ENCODE measurements at regions of chr4 and their contacts with region 1.

Region 1: DNA sequence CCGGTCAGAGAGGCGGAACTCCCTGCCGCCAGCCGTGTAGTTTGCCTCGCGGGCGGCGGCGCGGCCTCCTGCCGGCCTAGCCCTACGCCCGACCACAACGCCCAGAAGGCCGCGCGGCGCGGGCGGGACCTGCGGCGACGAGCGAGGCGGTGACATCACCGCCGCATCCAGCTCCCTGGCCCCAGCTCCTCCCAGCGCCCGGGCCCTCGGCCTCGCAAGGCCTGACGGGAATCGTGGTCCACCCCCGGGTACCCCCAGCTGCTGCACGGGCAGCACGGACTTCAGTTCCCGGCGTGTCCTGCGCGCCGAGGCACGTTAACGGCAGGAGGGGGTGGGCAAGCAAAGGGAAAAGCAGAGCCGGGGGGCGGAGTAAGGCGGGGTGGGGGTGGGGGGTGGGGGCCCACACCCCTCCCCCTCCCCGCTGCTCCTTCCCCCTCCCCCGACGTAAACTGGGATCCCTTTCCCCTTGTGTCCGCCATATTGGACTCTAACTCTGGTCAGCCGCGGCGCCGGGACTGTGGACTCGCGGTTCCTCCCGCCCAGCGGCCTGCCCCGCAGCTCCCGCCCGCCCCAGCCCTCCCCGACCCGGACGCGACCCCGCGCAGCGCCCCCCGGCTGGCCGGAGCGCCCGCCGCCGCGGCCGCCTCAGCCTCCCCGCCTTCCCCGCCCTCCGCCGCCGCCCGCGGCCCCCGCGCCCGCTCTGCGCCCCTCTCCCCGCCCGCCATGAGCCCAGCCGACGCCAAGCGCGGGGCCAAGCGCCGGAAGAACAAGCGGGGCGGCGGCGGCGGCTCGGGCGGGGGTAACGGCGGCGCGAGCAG is at the start of gene FAM193A:
- DNase-seq: peak; percentile 94
- ATAC-seq: peak; percentile 92
- H3K4me3 Mint-ChIP-seq: peak within 1 kb of the TSS; percentile 92
- H3K27ac Mint-ChIP-seq: peak within 1 kb of the TSS; percentile 90
- H3K4me1 Mint-ChIP-seq: peaks cover 23% of the 10 kb centered on the region
- H3K27me3 Mint-ChIP-seq: no peaks in the 10 kb centered on the region
- CTCF ChIP-seq: no peak
- total RNA-seq, gene FAM193A: 40.0 and 42.8 TPM in 2 replicates

Region 2: GRCh38 chr4:2241410-2242353 is 294.7 kb before region 1 on chr4 and contains the starts of genes HAUS3 and POLN:
- CTCF ChIA-PET with region 1: no interaction called
- POLR2A ChIA-PET with region 1: interaction called, 5 read pairs
- intact Hi-C with region 1: loop called (anchors 1 kb)
- DNase-seq: peak; percentile 99
- ATAC-seq: peak; percentile 96
- H3K4me3 Mint-ChIP-seq: peak within 1 kb of the TSS; percentile 91
- H3K27ac Mint-ChIP-seq: peak within 1 kb of the TSS; percentile 86
- H3K4me1 Mint-ChIP-seq: peaks cover 54% of the 10 kb centered on the region
- H3K27me3 Mint-ChIP-seq: no peaks in the 10 kb centered on the region
- CTCF ChIP-seq: no peak
- total RNA-seq, gene HAUS3: 17.9 and 19.0 TPM in 2 replicates
- total RNA-seq, gene POLN: 1.4 and 1.7 TPM in 2 replicates

Region 3: DNA sequence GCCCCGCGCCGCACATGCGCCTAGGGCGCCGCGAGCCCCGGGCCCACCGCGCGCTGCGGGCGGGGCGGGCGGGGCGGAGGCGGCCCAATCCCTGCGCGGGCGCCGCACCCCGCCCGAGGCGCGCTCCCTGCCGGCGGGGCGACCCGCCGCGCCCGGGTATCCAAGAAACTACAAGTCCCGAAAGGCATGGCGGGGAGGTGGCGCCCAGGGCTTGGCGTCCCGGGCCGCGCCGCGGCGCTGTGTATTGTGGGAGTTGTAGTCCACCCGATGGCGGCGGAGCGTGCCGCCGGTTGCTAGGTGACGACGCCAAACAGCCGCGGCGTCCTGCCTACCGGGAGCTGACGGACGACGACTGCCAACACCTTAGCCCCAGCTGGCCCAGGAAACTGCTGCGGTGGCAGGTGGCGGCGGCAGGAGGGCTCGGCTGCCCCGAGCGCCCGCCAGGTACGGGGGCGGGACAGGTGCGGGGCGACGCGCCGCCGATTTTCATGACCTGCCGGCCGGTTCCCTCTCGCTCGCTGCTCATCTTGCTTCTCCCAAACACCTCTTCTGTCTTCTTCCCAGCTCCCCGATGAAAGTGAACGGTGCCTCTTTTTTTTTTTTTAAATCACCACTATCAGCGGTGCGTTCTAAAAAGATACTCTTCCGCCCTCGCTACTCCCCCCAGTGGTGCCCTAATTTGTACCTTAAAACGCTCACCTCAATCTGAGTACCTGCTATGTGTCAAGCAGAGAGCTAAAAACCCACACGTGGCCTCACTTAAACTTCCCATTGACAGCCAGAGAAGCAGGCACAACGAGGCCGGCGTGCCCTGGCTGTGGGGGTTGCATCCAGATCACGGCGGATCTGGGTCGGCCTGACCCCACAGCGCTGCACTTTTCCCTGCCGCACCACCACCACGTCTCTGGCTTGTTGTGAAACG is 117.5 kb before region 1 on chr4 and contains the start of gene CFAP99:
- CTCF ChIA-PET with region 1: interaction called, 3 read pairs
- POLR2A ChIA-PET with region 1: no interaction called
- intact Hi-C with region 1: loop called (anchors 1 kb)
- DNase-seq: peak; percentile 93
- ATAC-seq: peak; percentile 91
- H3K4me3 Mint-ChIP-seq: peak within 1 kb of the TSS; percentile 91
- H3K27ac Mint-ChIP-seq: peak within 1 kb of the TSS; percentile 90
- H3K4me1 Mint-ChIP-seq: peaks cover 39% of the 10 kb centered on the region
- H3K27me3 Mint-ChIP-seq: peaks cover 28% of the 10 kb centered on the region
- CTCF ChIP-seq: no peak
- total RNA-seq, gene CFAP99: not detected in 2 replicates

Region 4: DNA sequence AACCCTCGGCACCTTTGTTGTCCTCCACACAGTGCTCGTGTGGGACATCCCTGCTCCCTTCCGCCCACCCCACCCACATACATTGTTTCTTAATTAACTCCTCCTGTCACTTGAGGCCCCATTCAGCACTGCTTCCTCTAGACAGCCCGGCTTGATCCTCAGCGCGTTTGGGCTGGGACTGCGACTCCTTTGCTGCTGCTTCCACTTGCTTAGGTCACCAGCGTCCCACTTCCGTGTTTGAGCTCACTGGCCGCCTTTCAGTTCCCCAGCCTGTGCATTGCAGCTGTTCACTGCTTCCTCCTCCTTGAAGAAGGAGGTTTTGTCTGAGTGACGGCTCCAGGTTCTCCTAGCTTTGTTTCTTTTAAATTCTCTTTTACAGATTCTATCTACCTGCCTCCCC is 51.4 kb before region 1 on chr4:
- CTCF ChIA-PET with region 1: interaction called, 8 read pairs
- POLR2A ChIA-PET with region 1: interaction called, 13 read pairs
- intact Hi-C with region 1: loop called (anchors 5 kb)
- DNase-seq: peak; percentile 64
- ATAC-seq: peak; percentile 86
- H3K4me3 Mint-ChIP-seq: peak overlapping the region; percentile 75
- H3K27ac Mint-ChIP-seq: peak overlapping the region; percentile 92
- H3K4me1 Mint-ChIP-seq: peaks cover 93% of the 10 kb centered on the region
- H3K27me3 Mint-ChIP-seq: no peaks in the 10 kb centered on the region
- CTCF ChIP-seq: no peak

Region 5: GRCh38 chr4:2552806-2553205 is 16.4 kb after region 1 on chr4:
- CTCF ChIA-PET with region 1: no interaction called
- POLR2A ChIA-PET with region 1: no interaction called
- intact Hi-C with region 1: no loop called
- DNase-seq: no peak
- ATAC-seq: no peak
- H3K4me3 Mint-ChIP-seq: no peak overlapping the region
- H3K27ac Mint-ChIP-seq: no peak overlapping the region
- H3K4me1 Mint-ChIP-seq: peaks cover 39% of the 10 kb centered on the region
- H3K27me3 Mint-ChIP-seq: no peaks in the 10 kb centered on the region
- CTCF ChIP-seq: no peak

Region 6: DNA sequence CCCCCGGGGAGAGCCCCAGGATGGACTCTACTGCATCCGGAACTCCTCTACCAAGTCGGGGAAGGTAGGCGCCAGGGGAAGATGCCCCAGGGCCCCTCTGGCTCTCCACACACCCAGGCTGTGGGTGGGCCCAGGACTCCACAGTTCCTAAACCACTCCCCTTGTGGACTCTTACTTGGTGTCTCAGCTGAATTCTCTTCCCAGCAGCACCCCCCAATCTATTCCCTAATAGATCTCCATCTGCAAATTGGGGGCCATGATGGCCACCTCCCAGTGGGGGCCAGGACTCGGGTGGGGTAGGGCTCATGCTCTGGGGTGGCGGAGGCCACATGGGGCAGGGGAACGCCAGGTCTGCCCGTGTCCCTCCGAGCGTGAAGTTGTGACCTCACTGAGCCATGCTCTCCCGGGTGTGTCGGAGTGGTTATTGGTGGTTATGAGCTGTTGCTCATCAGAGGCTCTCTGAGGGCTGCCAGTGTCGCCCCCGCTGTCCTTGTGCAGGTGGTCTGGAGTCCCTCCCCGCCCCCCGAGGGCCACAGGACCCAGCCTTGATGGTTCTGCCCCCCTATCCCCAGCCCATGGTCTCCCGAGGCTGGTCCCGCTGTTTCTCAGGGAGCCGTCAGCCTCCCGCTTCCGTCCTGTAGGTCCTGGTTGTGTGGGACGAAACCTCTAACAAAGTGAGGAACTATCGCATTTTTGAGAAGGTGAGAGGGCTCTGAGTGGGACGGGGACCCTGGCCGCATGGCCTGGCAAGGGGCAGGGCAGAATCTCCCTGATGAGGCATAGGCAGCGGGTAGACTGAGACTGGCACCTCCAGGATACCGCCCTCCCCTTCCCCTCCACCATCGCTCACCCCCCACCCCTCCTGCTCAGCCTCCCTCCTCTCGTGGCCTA is 296.2 kb after region 1 on chr4:
- CTCF ChIA-PET with region 1: no interaction called
- POLR2A ChIA-PET with region 1: no interaction called
- intact Hi-C with region 1: loop called (anchors 2 kb)
- DNase-seq: peak; percentile 65
- ATAC-seq: peak; percentile 85
- H3K4me3 Mint-ChIP-seq: peak overlapping the region; percentile 67
- H3K27ac Mint-ChIP-seq: peak overlapping the region; percentile 83
- H3K4me1 Mint-ChIP-seq: peaks cover 60% of the 10 kb centered on the region
- H3K27me3 Mint-ChIP-seq: no peaks in the 10 kb centered on the region
- CTCF ChIP-seq: no peak

Region 7: GRCh38 chr4:3074078-3074795 is 537.8 kb after region 1 on chr4 and contains the starts of genes HTT and HTT-AS:
- CTCF ChIA-PET with region 1: no interaction called
- POLR2A ChIA-PET with region 1: interaction called, 4 read pairs
- intact Hi-C with region 1: loop called (anchors 10 kb)
- DNase-seq: peak; percentile 93
- ATAC-seq: peak; percentile 77
- H3K4me3 Mint-ChIP-seq: peak within 1 kb of the TSS; percentile 92
- H3K27ac Mint-ChIP-seq: peak within 1 kb of the TSS; percentile 95
- H3K4me1 Mint-ChIP-seq: peaks cover 39% of the 10 kb centered on the region
- H3K27me3 Mint-ChIP-seq: no peaks in the 10 kb centered on the region
- CTCF ChIP-seq: no peak
- total RNA-seq, gene HTT: 239 and 242 TPM in 2 replicates
- total RNA-seq, gene HTT-AS: not detected in 2 replicates

Measured in activated B cell treated with CpG ODN at 0.5 μM for 24 hours (primary cell).